Left cardiac atrium (tissue), 4 donors: ENCODE measurements at regions of chr7 and their contacts with region 1.

Region 1: DNA sequence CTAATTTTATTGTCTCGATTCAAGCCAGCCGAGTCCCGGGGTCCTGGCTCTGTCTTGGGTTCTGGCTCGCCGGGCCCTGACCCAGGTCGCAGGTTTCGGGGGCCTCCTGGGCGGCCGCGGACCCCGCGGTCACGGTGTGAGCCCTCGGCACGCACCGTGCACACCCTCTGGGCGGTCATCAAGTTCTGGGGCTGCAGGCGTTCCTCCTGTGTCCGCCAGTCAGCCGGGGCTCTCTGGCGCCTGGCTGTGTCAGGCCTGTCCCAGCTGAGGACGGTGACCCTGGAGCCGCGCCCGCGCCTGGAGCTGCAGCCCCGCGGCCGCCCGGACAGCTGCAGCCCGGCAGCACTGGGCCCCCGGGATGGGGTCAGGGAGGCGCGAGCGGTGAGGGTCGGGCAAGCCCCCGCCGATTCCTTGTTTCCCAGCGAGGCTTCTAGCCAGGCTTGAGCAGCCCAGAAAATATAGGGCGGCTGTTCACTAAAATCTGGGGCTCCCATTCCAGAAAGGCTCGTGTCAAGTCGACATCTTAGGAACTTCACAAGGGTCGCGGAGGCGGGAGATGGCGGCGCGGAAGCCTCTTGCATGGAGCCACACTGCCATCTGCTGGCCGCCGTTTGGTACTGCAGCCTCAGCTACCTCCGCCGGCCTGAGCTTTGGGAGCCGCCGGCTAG is 4.2 kb upstream of the HOXA7 start:
- DNase-seq: peak; percentile 87
- ATAC-seq: peak; percentile 84

Region 2: DNA sequence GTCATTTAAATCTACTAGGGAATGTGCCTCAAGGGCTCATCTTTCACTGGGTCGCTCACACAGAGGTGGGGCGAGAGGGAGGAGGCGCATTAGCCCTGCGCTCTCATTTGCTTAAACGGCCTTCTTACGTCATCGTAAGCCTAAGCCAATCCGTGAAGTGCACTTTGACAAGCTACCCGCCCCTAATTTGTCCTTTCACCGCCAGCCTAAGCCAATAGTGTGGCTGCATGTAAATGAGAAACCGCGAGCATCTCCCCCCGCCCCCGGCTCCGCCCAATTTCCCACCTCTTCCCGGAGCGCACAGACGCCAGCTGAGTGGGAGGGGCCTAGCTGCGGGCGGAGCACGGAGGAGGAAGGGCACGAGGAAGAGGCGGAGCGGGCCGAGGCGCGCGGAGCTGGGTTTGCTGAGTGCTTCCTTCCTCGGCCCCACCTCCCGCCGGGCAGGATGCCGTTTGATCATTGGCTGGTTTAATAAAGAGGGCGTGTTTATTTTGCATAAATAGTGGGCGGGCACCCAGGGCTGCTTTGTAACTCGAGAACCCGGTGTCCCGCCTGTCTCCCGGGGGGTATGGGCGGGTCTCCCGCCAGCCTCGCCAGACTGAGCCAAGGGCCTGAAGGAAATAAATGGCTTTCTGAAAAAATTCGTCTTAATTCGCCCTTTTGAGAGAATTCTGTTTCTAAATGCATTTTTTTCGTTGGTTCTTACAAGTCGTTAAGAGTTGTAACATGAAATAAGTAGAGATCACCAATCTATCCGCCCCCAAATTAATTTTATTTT is 1298.2 kb before region 1 on chr7:
- intact Hi-C with region 1: loop called in 1 of 2 experiments (anchors 10 kb)
- DNase-seq: peak; percentile 81
- ATAC-seq: peak; percentile 74 to 96

Region 3: GRCh38 chr7:26388256-26388655 is 772.4 kb before region 1 on chr7:
- intact Hi-C with region 1: loop called in 1 of 2 experiments (anchors 10 kb)
- DNase-seq: no peak
- ATAC-seq: no peak

Region 4: DNA sequence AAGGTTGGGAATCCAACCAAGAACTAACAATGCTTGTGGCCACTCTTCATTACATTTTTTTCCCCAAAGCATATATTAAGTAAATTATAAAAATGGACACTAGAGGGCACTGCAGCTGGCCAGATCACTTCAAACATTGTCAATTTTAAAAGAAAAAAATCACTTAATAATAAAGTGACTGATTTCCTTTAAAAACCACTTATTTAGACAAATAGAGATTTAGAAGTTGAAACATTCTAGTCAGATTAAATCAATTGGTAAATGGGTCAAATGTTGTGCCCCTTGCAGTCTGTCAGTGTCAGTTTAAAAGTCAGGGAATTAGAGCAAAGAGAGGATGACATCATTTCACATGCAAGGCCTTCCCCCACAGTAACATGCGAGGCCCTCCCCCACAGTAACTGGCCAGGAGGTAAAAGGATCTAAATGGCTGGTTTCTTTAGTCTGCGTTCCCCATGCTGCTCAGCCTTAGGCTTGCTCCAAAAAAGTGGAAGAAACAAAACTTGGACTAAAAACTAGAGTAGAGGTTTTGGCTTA is 474.2 kb before region 1 on chr7:
- intact Hi-C with region 1: loop called in 1 of 2 experiments (anchors 2 kb)
- DNase-seq: no peak
- ATAC-seq: peak; percentile 53 to 70

Region 5: DNA sequence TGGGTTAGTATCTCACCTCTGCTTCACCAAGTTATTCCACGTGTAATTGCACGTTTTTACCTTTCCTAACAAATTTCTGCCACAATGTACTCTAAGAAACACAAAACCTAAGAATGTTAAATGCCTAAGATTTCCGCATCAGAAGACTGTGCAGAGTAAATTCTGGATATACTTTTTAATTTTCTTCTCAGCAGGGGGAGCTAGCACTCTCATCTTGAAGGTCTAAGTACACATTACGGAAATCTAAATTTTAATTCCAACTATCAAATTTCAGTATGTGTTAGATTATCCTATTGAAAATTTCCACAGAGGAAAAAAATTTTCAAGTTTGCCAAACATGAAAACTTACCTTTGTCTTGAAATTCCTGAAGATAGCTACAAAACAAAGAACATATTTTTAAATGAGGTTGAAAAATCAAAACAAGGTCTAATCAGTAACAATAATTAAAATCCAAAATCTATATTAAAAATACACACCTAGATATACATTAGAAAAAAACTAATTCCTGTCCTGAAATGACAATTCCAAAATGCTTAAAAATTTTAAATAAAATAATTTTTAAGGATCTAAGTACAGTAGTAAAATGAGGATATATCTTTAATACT is 306.8 kb before region 1 on chr7:
- intact Hi-C with region 1: loop called in 1 of 2 experiments (anchors 2 kb)
- DNase-seq: no peak
- ATAC-seq: peak in 1 of 2 donors; percentile 38